Activated CD4-positive, alpha-beta T cell treated with anti-CD3 and anti-CD28 coated beads for 36 hours (primary cell): ENCODE measurements at regions of chr7 and their contacts with region 1.

Region 1: DNA sequence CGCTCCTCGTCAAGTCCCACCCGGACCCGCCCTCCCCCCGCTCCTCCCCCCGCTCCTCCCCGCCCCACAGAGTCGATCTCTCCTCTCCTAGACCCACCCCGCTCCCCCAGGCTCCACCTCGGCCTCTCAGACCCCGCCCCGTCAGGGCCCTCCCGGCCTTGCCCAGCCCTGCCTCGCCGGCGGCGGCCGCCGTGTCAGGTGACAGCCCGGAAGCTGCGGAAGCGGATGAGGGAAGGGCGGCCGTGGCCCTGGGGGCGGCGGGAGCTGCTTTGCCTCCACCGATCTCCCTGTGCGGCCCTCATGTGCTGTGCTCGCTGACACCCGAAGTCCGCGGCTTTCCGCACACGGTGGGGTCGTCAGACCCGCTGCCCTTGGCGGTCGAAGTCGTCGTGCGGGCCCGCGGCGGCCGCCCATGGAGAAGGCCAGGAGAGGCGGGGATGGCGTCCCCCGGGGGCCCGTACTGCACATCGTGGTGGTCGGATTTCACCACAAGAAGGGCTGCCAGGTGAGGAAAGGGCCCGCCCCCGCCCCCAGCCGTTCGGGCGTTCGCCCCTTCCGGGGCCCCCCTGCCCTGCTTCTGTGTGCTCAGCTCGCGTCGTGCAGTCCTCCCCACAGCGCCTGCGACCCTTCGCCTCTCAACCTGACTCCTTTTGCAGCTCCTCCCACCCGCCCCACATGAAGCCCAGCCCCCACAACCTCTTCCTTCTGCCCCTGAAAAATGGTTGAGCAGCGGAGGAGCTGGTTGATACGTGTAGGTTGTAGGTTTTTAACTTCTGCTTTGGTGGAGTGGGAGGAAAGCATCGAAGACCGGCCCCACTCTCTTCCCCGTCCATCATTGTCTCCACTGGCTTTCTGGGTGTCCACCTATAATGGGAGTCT is at the start of gene AVL9:
- DNase-seq: peak; percentile 99
- ATAC-seq: peak; percentile 97
- H3K4me3 Mint-ChIP-seq: peak within 1 kb of the TSS; percentile 87
- H3K27ac Mint-ChIP-seq: peak within 1 kb of the TSS; percentile 96
- H3K4me1 Mint-ChIP-seq: peaks cover 36% of the 10 kb centered on the region
- H3K27me3 Mint-ChIP-seq: no peaks in the 10 kb centered on the region
- total RNA-seq, gene AVL9: 37.4 to 56.6 TPM

Region 2: GRCh38 chr7:30727061-30727945 is 1768.2 kb before region 1 on chr7:
- CTCF ChIA-PET with region 1: no interaction called
- POLR2A ChIA-PET with region 1: no interaction called
- intact Hi-C with region 1: loop called in 1 of 2 experiments (anchors 5 kb)
- DNase-seq: peak; percentile 69
- ATAC-seq: peak; percentile 89
- H3K4me3 Mint-ChIP-seq: peak overlapping the region; percentile 68
- H3K27ac Mint-ChIP-seq: peak overlapping the region; percentile 92
- H3K4me1 Mint-ChIP-seq: peaks cover 60% of the 10 kb centered on the region
- H3K27me3 Mint-ChIP-seq: no peaks in the 10 kb centered on the region

Region 3: DNA sequence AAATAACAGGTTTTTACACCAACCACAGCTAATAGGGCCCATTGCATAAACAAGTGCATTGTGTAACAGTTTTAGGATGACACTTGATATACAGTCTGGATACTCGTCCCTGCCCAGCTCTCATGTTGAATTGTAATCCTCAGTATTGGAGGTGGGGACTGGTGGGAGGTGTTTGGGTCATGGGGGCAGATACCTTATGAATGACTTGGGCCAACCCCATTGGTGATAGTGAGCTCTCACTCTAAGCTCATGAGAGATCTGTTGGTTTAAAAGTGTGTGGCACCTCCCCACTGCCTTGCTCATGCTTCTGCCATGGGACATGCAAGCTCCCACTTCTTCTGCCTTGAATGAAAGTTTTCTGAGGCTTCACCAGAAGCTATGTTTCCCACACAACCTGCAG is 562.1 kb before region 1 on chr7:
- CTCF ChIA-PET with region 1: no interaction called
- POLR2A ChIA-PET with region 1: interaction called, 10 read pairs
- intact Hi-C with region 1: no loop called
- DNase-seq: no peak
- ATAC-seq: no peak
- H3K4me3 Mint-ChIP-seq: no peak overlapping the region
- H3K27ac Mint-ChIP-seq: no peak overlapping the region
- H3K4me1 Mint-ChIP-seq: no peaks in the 10 kb centered on the region
- H3K27me3 Mint-ChIP-seq: no peaks in the 10 kb centered on the region

Region 4: GRCh38 chr7:32204361-32205018 is 291.0 kb before region 1 on chr7:
- CTCF ChIA-PET with region 1: no interaction called
- POLR2A ChIA-PET with region 1: no interaction called
- intact Hi-C with region 1: no loop called
- DNase-seq: peak; percentile 34
- ATAC-seq: no peak
- H3K4me3 Mint-ChIP-seq: no peak overlapping the region
- H3K27ac Mint-ChIP-seq: no peak overlapping the region
- H3K4me1 Mint-ChIP-seq: no peaks in the 10 kb centered on the region
- H3K27me3 Mint-ChIP-seq: peaks cover 3% of the 10 kb centered on the region

Region 5: DNA sequence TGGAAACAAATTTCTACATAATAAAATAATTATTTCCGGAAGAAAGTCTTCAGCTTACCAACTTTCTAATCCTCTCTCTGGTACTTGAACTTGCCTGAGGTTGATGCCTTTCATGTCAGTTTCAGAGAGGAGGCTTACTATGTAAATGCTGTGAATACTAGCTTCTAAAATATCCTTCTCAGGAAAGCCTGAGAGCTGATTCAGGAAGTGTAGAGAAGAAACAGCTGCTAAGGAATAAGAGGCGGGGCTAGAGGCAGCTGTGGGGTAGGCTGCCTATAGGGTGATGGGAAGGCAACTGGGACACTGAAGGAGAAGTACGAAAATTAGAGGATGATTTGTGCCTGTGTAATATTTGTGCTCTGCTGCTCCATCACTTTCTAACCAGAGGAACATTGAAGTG is 69.0 kb after region 1 on chr7:
- CTCF ChIA-PET with region 1: no interaction called
- POLR2A ChIA-PET with region 1: no interaction called
- intact Hi-C with region 1: loop called (anchors 5 kb)
- DNase-seq: no peak
- ATAC-seq: no peak
- H3K4me3 Mint-ChIP-seq: no peak overlapping the region
- H3K27ac Mint-ChIP-seq: no peak overlapping the region
- H3K4me1 Mint-ChIP-seq: peaks cover 18% of the 10 kb centered on the region
- H3K27me3 Mint-ChIP-seq: no peaks in the 10 kb centered on the region

Region 6: DNA sequence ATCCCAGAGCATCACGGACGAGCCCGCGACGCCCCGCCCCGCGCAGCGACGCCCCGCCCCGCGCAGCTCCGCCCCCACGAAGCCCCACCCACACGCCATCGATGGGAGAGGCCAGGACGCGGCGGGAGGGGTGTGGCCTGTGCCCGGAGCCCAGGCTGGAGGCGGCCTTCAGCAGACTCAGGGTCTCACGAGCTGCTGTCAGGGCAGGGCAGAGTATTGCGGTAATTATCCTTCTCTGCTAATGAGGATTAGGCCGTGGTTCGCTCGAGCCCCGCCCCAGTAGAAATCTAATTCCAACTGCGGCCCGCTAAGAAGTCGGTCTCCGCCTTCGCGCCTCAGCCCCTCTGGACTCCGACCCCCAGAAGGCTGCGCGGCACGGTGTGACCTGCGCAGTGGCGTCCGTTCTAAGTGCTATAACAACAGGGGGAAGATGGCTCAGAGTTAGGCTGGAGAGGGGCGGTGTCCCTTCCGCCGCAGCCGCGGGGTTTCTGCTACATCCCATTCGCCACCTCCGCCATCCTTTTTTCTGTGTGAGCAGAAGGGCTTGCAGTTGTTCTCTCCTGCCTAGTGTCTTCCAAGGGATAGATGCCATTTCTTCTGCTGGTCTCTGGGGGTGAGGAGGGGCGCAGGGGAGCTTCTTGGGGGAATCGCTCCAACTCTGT is 567.4 kb after region 1 on chr7:
- CTCF ChIA-PET with region 1: no interaction called
- POLR2A ChIA-PET with region 1: no interaction called
- intact Hi-C with region 1: loop called (anchors 1 to 5 kb)
- DNase-seq: peak; percentile 95
- ATAC-seq: peak; percentile 96
- H3K4me3 Mint-ChIP-seq: peak overlapping the region; percentile 95
- H3K27ac Mint-ChIP-seq: peak overlapping the region; percentile 93
- H3K4me1 Mint-ChIP-seq: peaks cover 32% of the 10 kb centered on the region
- H3K27me3 Mint-ChIP-seq: no peaks in the 10 kb centered on the region